Left cardiac atrium (tissue), 4 donors: ENCODE measurements at regions of chr7 and their contacts with region 1.

Region 1: DNA sequence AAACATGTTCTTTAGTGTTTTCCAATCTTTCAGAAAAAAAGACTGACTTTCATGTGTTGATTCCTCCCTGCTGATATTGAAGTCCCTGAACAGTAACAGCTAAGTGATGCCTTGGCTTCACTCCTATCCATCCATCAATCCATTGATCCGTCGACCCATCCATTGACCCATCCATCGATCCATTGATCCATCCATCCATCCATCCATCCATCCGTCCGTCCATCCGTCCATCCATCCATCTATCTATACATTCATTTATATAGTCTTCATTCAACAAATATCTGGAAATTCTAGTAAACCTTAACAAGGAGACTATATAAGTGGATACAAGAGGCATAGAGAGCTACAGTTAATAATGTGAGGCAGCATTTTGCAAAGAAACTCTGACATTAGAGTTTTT is 21.6 kb upstream of the LAMB1 start:
- DNase-seq: no peak
- ATAC-seq: no peak

Region 2: GRCh38 chr7:108063520-108063933 is 39.0 kb after region 1 on chr7:
- intact Hi-C with region 1: loop called in 1 of 2 experiments (anchors 2 kb)
- DNase-seq: no peak
- ATAC-seq: peak; percentile 20 to 21